ENCODE measurements at regions of chr15 and their contacts with region 1.

Region 1: DNA sequence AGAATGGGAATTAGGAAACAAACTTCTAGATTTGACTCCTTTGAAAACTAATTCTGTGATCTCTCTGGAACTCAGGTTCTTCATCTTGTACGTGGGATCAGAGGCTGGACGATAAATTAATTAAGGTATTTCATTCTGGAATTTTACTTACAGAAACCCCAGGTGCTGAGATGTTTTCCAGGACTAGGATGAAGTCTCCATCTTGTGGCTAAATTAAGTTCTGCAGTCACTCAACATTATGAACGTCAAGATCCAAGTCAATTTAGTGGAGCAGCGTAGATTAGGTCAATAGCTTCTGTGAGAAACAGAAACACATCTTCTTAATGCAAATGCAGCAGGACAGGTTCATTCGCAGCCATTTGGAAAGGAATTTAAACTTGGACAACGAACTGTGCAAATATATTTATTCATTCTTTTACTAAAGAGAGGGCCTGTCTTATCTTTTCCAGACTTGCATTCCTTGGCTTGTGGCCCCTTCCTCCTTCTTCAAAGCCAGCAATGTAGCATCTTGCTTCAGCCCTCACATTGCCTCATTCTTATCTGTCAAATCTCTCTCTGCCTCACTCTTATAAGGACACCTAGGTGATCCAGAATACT is 26.7 kb upstream of the TMC3 start:
- DNase-seq: no peak
- ATAC-seq: peak; percentile 54

Region 2: DNA sequence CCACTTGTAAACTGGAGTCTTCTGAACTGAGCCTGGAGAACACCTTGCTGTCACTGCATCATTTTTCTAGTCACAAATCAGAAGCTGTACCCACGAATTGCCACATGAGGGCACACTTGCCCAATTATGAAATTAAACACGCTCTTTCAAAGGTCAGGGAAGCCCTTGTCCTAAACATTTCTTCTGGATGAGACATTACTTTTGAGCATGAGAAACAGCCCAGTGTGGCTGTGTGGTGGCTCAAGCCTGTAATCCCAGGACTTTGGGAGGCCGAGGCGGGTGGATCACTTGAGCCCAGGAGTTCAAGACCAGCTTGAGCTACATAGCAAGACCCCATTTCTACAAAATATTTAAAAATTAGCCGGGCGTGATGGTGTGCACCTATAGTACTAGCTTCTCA is 294.2 kb before region 1 on chr15:
- intact Hi-C with region 1: loop called in 1 of 2 experiments (anchors 10 kb)
- DNase-seq: peak in 1 of 2 donors; percentile 37
- ATAC-seq: peak; percentile 67

Region 3: DNA sequence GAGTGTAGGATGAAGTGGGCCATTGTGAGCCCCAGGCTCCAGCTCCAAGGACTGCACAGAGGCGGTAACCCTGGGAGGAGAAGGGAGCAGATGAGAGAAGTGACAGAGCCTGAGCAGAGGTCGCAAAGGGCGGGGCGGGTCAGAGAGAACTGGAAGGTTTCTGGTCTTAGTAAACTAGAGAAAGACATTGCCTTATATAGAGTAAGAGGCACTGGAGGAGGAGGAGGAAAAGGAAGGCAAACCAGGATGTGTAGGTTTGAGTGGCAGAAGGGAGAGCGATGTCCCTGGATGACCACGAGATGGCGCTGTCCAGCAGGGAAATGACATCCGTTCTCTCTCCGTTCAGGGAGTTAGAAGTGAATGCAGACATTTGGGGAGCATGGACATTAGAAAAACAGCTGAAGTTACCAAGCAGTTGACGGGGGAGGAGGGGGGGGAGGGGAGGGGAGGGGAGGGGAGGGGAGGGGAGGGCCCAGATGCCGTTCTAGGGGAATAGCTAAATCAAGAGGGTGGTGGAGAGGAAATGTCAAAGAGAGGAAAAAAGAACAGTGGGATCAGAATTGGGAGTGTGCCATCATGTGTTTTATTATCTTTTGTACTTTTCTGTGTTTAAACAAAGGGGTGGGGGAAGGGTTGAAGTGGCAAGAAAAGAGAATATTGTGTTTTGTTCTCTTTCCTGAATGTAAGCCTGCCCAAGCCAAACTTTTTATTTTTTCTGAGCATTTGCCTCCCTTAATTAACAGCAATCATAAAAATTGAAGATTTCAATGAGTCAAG is 125.6 kb before region 1 on chr15:
- intact Hi-C with region 1: loop called (anchors 5 to 10 kb)
- DNase-seq: peak; percentile 72 to 78
- ATAC-seq: peak; percentile 88

Region 4: DNA sequence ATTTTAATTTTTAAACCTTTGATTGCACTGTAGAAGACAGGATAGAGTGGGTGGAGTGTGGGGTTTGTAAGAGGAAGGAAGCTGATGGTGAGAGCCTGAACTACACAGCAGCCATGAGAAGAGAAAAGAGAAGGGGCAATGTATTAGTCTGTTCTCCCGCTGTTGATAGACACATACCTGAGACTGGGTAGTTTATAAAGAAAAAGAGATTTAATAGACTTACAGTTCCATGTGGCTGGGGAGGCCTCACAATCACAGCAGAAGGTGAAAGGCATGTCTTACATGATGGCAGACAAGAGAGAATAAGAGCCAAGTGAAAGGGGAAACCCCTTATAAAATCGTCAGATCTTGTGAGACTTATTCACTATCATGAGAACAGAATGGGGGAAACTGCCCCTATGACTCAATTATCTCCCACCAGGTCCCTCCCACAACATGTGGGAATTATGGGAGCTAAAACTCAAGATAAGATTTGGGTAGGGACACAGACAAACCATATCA is 114.1 kb before region 1 on chr15:
- intact Hi-C with region 1: loop called in 1 of 2 experiments (anchors 10 kb)
- DNase-seq: no peak
- ATAC-seq: no peak

Measured in left colon (tissue), 2 donors.